PC-3 (cell line): ENCODE measurements at regions of chr10 and their contacts with region 1.

Region 1: DNA sequence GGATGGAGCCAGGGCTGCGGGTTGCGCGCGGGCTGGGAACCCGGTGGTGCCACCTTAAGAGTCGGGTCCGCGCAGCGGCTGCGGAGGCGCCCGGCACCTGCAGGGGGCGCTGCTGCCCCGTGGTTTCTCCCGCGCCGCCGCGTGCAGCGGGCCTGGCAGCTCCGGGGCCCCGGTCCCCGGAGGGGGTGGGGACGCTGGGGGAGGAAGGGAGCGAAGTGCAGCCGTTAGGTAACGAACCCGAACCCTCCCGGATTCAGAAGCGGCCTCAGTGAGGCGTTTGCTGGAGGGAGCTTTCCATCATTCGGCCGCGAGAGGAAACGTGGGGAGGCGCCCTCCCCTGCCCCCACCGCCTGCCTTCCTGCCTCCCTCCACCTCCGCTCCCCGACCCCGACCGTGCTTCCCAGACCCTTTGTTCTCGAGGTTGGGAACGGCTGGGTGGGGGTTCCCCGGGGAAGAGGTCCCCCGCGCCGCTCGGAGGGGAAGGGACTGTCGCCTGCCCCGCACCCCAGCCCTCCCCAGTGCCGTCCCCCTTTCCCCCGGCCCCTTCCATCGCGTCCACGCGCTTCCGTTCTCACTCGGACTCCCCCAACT is 29.6 kb downstream of the SKIDA1 start:
- DNase-seq: peak; percentile 89
- ATAC-seq: peak; percentile 63
- H3K4me3 ChIP-seq: peak overlapping the region; percentile 93
- H3K27ac ChIP-seq: peak overlapping the region; percentile 21; the same call in 1 of the 2 replicates
- H3K4me1 ChIP-seq: no peaks in the 10 kb centered on the region; the same call in 1 of the 2 replicates
- H3K27me3 ChIP-seq: no peaks in the 10 kb centered on the region
- CTCF ChIP-seq: peak; percentile 84

Region 2: DNA sequence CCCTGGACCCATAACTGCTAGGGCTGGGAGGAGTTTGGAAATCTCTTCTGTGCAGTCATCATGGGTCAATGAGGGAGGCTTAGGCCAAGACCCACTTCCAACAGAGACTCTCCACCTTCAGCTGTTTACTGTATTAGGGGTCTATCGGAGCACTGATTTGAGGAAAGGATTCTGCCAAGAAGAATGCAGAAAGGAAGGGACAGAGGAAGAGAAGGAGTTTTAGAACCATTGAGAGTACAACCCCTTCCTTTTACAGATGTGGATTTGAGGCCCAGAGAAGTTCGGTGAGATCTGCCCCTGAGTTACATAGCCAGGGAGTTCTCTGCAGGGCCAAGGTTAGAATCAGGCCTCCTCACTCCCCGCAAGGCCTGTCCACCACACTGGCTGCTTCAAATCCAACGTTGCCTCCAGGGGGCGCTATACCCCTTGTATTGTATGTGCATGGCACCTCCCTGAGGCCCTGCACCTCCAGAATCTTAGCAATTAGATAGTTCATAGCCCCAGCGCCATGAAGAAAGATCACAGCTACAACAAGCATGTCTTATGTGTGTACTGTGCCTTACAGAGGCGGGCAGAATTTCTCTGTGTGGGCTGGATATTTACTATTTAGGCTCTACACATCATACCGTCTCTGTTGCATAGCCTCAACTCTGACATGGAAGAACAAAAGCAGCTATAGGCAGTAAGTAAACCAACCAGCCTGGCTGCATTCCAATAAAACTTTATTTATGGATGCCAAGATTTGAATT is 217.2 kb before region 1 on chr10:
- CTCF ChIA-PET with region 1: interaction called, 4 read pairs
- POLR2A ChIA-PET with region 1: no interaction called
- intact Hi-C with region 1: loop called (anchors 2 kb)
- DNase-seq: peak; percentile 90
- ATAC-seq: peak; percentile 98
- H3K4me3 ChIP-seq: no peak overlapping the region
- H3K27ac ChIP-seq: no peak overlapping the region
- H3K4me1 ChIP-seq: peaks cover 8% of the 10 kb centered on the region
- H3K27me3 ChIP-seq: no peaks in the 10 kb centered on the region
- CTCF ChIP-seq: peak; percentile 89

Region 3: GRCh38 chr10:21336476-21337170 is 159.2 kb before region 1 on chr10:
- CTCF ChIA-PET with region 1: no interaction called
- POLR2A ChIA-PET with region 1: no interaction called
- intact Hi-C with region 1: loop called (anchors 10 kb)
- DNase-seq: peak; percentile 94
- ATAC-seq: peak; percentile 72
- H3K4me3 ChIP-seq: peak overlapping the region; percentile 47; the same call in 1 of the 2 replicates
- H3K27ac ChIP-seq: peak overlapping the region; percentile 86
- H3K4me1 ChIP-seq: peaks cover 48% of the 10 kb centered on the region
- H3K27me3 ChIP-seq: no peaks in the 10 kb centered on the region
- CTCF ChIP-seq: no peak

Region 4: GRCh38 chr10:21732067-21732772 is 236.4 kb after region 1 on chr10:
- CTCF ChIA-PET with region 1: no interaction called
- POLR2A ChIA-PET with region 1: no interaction called
- intact Hi-C with region 1: loop called (anchors 10 kb)
- DNase-seq: peak; percentile 34
- ATAC-seq: peak; percentile 62
- H3K4me3 ChIP-seq: no peak overlapping the region
- H3K27ac ChIP-seq: peak overlapping the region; percentile 27
- H3K4me1 ChIP-seq: peaks cover 6% of the 10 kb centered on the region; the same call in 1 of the 2 replicates
- H3K27me3 ChIP-seq: no peaks in the 10 kb centered on the region
- CTCF ChIP-seq: peak; percentile 73